ENCODE measurements at regions of chr12 and their contacts with region 1.

Region 1: GRCh38 chr12:8860165-8860961 is 37.9 kb downstream of the A2ML1 start:
- DNase-seq: peak; percentile 70

Region 2: GRCh38 chr12:8662593-8662992 is 197.8 kb before region 1 on chr12 and contains the start of gene MFAP5:
- CTCF ChIA-PET with region 1: interaction called, 10 read pairs
- POLR2A ChIA-PET with region 1: no interaction called
- DNase-seq: no peak

Region 3: GRCh38 chr12:8681041-8681902 is 179.1 kb before region 1 on chr12:
- CTCF ChIA-PET with region 1: interaction called, 13 read pairs
- POLR2A ChIA-PET with region 1: no interaction called
- DNase-seq: no peak

Region 4: DNA sequence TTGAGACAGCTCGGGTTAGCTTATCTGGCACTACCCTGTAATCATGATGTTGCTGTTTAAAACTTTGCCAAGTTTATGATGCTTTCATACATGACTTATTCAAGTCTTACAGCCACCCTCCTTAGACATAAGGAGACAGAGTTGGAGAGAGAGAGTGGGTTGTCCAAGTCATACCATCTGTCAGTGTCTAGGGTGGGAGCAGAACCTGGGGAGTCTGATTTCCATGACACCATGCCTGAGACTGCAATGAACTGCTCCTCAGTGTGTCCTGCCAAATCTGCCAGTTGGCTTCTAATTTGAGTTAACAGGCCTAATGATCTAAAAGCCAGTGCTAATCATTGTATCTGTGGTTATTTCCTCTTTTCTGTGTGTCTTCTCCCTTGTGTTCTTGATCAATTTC is 10.2 kb after region 1 on chr12:
- CTCF ChIA-PET with region 1: interaction called, 20 read pairs
- POLR2A ChIA-PET with region 1: no interaction called
- DNase-seq: no peak

Region 5: GRCh38 chr12:8890313-8891085 is 30.1 kb after region 1 on chr12:
- CTCF ChIA-PET with region 1: interaction called, 12 read pairs
- POLR2A ChIA-PET with region 1: interaction called, 4 read pairs
- DNase-seq: peak; percentile 72

Measured in HEK293T (cell line).